Right ventricle myocardium inferior (tissue), 1 donor: ENCODE measurements at regions of chr1 and their contacts with region 1.

Region 1: GRCh38 chr1:87084244-87084836 is 169.9 kb downstream of the HS2ST1 start:
- DNase-seq: no peak
- ATAC-seq: no peak

Region 2: GRCh38 chr1:86380257-86380861 is 704.0 kb before region 1 on chr1:
- intact Hi-C with region 1: loop called (anchors 10 kb)
- DNase-seq: no peak
- ATAC-seq: peak; percentile 65

Region 3: DNA sequence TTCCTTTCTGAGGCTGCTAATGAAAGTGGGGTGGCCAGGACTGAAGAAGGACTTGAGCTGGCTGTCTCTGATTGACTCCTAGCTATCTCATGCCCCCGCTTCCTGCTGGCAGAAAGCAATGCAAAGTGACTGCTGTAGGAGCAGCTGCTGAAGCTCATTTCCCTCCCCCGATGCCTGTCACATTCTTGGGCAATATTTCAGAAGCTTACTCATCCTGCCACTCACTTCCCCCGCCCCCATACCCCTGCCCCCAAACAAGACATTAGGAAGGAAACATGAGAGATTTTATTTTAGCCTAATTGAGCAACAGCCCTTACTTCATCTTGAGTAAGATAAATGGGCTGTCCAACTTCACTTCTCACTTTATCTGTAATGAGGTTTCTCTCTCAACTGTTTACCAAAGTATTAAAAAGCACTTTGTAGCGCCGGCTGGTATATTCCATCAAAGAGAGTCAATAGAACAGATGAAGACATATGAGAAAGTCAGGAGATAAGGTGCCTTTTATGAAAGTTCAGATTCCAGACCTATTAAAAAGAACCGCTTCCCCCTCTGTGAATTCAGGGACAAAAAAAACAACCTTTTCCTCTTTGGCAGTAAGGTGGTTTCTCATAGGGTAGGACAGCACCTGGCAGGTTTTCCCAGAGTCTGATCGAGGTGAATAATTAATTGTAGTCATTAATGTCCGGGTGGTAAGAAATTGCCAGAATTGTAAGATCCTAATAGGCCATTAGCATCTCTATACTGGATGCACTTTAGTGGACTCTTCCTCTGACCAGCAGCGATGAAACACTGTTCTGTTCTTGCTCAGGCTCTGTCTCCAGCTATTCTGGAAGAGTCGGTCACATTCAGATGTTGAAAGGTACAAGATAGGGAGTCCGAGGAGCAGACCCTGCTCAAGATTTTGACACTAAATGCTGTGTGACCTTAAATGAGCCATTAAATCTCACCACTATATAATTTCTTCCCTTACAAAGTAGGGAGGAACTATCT is 309.7 kb before region 1 on chr1:
- intact Hi-C with region 1: loop called (anchors 10 kb)
- DNase-seq: peak; percentile 85
- ATAC-seq: peak; percentile 93

Region 4: GRCh38 chr1:86833461-86834215 is 250.7 kb before region 1 on chr1:
- intact Hi-C with region 1: loop called (anchors 2 kb)
- DNase-seq: peak; percentile 75
- ATAC-seq: peak; percentile 91

Region 5: GRCh38 chr1:86993269-86993985 is 90.9 kb before region 1 on chr1:
- intact Hi-C with region 1: loop called (anchors 10 kb)
- DNase-seq: no peak
- ATAC-seq: no peak

Region 6: DNA sequence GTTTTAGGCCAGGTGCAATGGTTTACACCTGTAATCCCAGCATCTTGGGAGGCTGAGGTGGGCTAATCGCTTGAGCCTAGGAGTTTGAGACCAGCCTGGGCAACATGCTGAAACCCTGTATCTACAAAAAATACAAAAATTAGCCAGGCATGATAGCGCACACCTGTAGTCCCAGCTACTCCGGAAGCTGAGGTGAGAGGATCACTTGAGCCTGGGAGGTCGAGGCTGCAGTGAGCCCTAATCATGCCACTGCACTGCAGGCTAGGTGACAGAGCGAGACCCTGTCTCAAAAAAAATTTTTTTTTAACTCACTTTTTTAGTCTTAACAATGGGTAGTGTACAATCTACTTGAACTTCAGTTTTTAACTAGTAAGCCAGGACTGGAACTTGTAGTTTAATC is 32.4 kb before region 1 on chr1:
- intact Hi-C with region 1: no loop called
- DNase-seq: no peak
- ATAC-seq: no peak

Region 7: DNA sequence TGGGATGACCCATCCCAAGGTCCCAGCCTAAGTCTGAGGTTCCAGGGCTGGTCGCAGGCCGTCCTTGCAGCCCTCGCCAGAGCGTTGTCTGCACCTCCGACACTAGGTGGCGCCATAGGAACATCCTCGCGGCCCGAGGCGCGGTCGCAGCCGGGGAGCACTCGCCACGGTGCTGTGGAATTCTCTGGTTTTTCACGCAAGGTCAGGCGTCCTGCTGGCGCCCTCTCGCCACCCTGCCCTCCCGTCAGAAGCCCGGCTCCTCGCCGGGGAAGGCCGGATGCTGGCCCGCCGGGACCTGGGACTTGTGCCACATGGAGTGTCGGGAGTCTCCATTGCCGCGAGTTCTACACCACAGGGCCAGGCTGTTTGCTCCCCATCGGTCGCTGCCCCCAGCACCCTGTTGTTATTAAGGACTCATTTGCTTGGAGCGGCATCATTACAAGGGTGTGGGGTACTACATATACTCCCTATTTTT is 47.5 kb after region 1 on chr1:
- intact Hi-C with region 1: no loop called
- DNase-seq: peak; percentile 88
- ATAC-seq: peak; percentile 90

Region 8: DNA sequence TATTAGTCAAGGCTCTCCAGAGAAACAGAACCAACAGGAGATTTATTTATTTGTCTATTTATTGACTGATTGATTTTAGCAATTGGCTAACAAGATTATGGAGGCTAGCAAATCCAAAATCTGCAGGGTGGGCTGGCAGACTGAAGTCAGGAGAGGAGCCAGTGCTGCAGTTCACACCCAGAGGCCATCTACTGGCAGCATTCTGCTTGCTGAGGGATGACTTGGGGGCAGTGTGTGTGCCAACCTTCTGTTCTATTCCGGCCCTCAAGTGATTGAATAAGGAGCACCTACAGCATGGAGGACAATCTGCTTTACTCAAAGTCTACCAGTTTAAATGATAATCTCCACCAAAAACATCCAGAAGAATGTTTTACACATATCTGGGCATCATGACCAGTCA is 181.9 kb after region 1 on chr1:
- intact Hi-C with region 1: no loop called
- DNase-seq: no peak
- ATAC-seq: no peak